ENCODE measurements at regions of chr16 and their contacts with region 1.

Region 1: GRCh38 chr16:30370444-30371247 is at the start of gene TBC1D10B:
- DNase-seq: peak; percentile 100
- H3K4me3 ChIP-seq: peak within 1 kb of the TSS; percentile 99
- H3K27ac ChIP-seq: peak within 1 kb of the TSS; percentile 77
- H3K4me1 ChIP-seq: peaks cover 45% of the 10 kb centered on the region
- CTCF ChIP-seq: peak; percentile 56
- total RNA-seq, gene TBC1D10B: 38.6 and 44.9 TPM in 2 replicates

Region 2: DNA sequence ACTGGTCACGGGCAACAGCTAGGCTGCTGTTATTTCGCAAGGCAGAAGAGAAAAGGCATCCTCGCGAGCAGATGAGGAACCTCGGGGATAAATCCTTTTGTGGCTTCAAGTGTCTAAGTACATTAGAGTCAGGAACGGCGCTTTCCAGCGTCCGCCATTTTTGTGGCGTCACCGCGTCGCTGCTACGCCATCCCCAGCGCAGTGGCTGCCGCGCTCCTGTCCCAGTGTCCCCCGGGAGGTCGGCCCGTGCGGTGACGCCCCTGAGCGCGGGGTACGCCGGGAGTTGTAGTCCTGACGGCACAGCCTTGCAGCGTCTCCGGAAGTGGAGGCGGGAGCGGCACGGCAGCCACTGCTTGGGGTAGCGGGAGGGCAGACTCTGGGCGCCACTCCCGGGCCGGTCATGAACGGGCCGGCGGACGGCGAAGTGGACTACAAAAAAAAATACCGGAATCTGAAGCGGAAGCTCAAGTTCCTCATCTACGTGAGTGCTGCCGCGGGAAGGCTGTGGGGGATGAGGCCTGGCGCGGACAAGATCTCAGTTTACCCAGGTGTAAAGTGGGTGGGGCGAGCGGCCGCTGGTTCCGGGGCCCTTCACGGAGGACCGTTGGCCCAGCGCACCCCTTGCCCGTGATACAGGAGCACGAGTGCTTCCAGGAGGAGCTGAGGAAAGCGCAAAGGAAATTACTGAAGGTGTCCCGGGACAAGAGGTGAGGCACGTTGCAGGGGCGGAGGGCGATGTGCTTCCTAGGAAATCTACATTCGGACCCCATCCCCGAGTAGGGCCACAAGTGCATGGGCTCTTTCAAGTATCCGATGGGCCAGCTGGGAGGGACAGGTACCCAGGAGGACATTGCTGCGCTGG is 374.5 kb before region 1 on chr16 and contains the start of gene INO80E:
- CTCF ChIA-PET with region 1: no interaction called
- POLR2A ChIA-PET with region 1: no interaction called
- intact Hi-C with region 1: loop called (anchors 10 kb)
- DNase-seq: peak; percentile 99
- H3K4me3 ChIP-seq: peak within 1 kb of the TSS; percentile 85
- H3K27ac ChIP-seq: peak within 1 kb of the TSS; percentile 90
- H3K4me1 ChIP-seq: peaks cover 27% of the 10 kb centered on the region
- CTCF ChIP-seq: no peak
- total RNA-seq, gene INO80E: 88.0 and 94.7 TPM in 2 replicates

Region 3: DNA sequence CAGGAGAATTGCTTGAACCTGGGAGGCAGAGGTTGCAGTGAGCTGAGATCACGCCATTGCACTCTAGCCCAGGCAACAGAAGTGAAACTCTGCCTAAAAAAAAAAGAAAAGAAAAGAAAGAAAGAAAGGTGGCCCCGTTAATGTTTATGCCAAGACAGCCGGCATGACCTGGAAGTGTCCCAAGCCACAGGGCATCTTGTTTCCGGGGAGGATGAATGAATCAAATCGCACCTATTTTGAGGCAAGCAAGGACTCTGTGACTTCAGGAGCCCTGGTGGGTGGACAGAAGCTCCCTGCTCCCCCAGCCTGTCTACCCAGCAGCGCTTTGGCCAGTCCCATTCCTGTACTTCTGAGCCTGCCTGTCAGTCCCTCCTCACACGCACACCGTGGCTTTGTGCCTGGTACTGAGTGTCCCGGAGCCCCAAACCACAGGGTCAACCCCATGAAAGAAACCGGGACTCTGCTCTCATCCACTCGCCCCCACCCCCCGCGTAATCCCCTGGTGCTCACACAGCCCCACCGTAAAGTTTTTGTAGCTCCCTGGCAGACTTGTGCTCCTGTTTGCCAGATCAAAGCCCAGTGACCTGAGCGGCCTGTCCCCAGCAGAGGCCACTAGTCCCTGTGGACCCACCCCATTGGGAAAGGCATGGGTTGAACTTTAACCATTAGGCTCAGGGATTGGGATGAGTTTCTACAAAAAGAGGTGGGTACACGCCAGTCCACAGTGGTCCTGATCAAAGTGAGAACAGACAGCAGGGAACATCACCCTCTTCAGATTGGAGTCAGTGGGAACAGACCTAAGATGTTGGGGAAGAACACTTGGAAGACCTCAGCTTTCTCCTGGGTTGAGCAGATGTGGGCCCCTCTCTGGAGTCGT is 34.8 kb before region 1 on chr16:
- CTCF ChIA-PET with region 1: no interaction called
- POLR2A ChIA-PET with region 1: no interaction called
- intact Hi-C with region 1: loop called (anchors 2 kb)
- DNase-seq: no peak
- H3K4me3 ChIP-seq: peak overlapping the region; percentile 76
- H3K27ac ChIP-seq: peak overlapping the region; percentile 78
- H3K4me1 ChIP-seq: peaks cover 18% of the 10 kb centered on the region
- CTCF ChIP-seq: no peak

Region 4: GRCh38 chr16:30342751-30343490 is 27.7 kb before region 1 on chr16:
- CTCF ChIA-PET with region 1: interaction called, 6 read pairs
- POLR2A ChIA-PET with region 1: interaction called, 9 read pairs
- intact Hi-C with region 1: loop called (anchors 2 kb)
- DNase-seq: peak; percentile 58
- H3K4me3 ChIP-seq: peak overlapping the region; percentile 82
- H3K27ac ChIP-seq: peak overlapping the region; percentile 92
- H3K4me1 ChIP-seq: peaks cover 46% of the 10 kb centered on the region
- CTCF ChIP-seq: no peak

Region 5: DNA sequence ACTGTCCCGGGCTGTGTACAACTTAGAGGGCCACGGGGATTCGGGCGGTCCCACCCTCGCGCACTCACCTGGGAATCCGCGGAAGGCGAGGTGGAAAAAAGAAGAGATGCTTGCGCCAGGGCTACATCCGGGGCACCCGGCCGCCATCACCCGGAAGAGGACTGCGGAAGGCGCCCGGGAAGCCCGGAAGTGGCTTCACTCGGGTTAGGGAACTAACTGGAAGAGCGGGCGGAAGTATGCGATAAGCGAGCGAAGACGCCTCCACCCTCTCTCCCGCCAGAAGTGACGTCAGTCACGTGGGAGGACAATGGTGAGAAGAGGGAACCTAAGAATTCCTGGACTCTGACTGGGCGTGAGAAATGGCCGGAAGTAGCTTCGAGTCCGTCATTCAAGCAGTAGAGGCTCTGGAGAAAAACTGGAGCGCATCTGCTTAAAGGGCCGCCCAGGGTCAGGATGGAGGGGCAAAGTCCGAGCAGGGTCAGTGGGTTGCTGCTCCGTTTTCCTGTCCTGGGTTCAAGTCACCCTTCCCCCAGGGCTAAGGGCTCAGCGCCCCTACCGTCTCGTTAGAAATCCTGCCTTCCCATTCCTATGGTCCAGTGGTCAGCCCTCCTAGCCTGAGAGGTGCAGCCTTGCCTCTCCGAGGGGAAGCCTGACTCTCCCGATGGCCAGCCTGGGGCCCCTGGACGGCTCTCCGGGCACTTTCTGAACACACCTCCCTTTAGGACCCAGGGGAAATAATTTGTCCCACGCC is 15.3 kb before region 1 on chr16 and contains the start of gene CD2BP2:
- CTCF ChIA-PET with region 1: interaction called, 9 read pairs
- POLR2A ChIA-PET with region 1: interaction called, 21 read pairs
- intact Hi-C with region 1: no loop called
- DNase-seq: peak; percentile 98
- H3K4me3 ChIP-seq: peak within 1 kb of the TSS; percentile 98
- H3K27ac ChIP-seq: peak within 1 kb of the TSS; percentile 76
- H3K4me1 ChIP-seq: peaks cover 62% of the 10 kb centered on the region
- CTCF ChIP-seq: 0 out of 2 replicates have a peak, but pooled peaks have one; percentile 12
- total RNA-seq, gene CD2BP2: 69.2 and 94.7 TPM in 2 replicates

Region 6: DNA sequence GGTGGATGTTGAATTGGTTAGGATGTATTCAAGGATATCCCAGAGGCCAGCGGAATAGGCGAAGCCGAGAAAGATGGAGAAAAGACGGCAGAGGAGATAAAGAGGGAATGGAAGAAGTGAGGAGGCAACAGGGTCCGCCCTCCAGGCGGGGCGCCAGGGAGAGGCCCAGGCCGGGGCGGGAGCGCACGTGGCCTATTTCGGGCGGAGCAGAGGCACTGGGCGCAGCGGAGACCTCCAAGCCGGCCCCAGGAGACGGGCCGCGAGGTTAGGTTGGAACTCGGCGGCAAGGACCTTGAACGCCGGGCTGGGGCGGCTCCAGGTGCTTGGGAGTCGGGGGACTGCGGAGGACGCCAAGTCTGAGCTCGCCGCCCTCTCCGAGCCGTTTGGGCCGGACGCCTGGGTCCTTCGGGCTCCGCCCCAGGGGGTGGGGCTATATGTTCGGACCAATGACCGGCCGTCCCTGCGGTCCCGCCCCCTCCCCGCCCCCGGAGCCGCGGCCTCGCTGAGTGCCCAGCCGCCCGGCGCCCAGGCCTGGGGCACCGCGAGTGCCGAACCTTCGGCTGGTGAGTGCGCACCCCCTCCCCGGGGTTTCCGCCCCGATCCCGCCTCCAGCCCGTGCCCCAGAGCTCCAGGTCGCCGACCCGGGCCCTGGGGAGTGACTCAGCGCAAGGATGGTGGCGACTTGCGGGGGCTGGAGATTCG is 36.6 kb after region 1 on chr16 and contains the start of gene ZNF771:
- CTCF ChIA-PET with region 1: interaction called, 3 read pairs
- POLR2A ChIA-PET with region 1: interaction called, 14 read pairs
- intact Hi-C with region 1: no loop called
- DNase-seq: peak; percentile 93
- H3K4me3 ChIP-seq: peak within 1 kb of the TSS; percentile 84
- H3K27ac ChIP-seq: peak within 1 kb of the TSS; percentile 82
- H3K4me1 ChIP-seq: peaks cover 28% of the 10 kb centered on the region
- CTCF ChIP-seq: peak; percentile 49
- total RNA-seq, gene ZNF771: 6.4 and 11.3 TPM in 2 replicates

Region 7: DNA sequence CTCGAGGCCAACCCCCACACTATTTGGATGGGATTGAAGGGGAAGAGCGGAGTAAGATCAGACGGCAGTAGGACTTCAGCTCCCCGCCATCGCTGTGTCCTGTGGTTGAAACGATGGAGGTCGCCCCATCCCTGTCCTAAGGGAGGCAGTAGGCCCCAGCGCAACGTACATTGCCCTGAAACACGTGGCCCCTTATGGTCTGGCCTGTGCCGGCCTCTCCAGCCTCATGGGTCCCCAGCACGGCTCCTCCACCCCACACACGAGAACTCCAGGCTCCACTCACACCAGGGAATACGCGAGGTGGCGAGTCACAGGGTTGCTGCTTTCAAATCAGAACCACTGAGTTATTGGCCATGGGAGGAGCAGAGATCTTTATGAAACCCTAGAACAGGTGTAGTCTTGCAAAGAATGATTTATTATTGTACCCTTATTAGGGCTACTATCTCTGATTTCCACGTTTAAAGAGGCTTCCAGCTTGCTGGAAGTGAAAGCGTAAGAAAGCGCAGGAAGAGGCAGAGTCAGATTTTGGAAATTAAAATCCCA is 59.9 kb after region 1 on chr16:
- CTCF ChIA-PET with region 1: no interaction called
- POLR2A ChIA-PET with region 1: no interaction called
- intact Hi-C with region 1: no loop called
- DNase-seq: no peak
- H3K4me3 ChIP-seq: peak overlapping the region; percentile 14
- H3K27ac ChIP-seq: peak overlapping the region; percentile 62
- H3K4me1 ChIP-seq: peaks cover 21% of the 10 kb centered on the region
- CTCF ChIP-seq: peak; percentile 67; the same call in 1 of the 2 replicates

Region 8: GRCh38 chr16:30592871-30593270 is 222.2 kb after region 1 on chr16:
- CTCF ChIA-PET with region 1: no interaction called
- POLR2A ChIA-PET with region 1: interaction called, 12 read pairs
- intact Hi-C with region 1: no loop called
- DNase-seq: no peak
- H3K4me3 ChIP-seq: no peak overlapping the region
- H3K27ac ChIP-seq: no peak overlapping the region
- H3K4me1 ChIP-seq: peaks cover 12% of the 10 kb centered on the region
- CTCF ChIP-seq: no peak